Activated CD8-positive, alpha-beta memory T cell treated with anti-CD3 and anti-CD28 coated beads, Interleukin-2, amount 10 ng/mL, durations not matched to agents 7 days and 5 days (primary cell): ENCODE measurements at regions of chr3 and their contacts with region 1.

Region 1: GRCh38 chr3:184229394-184230080 is at the start of gene VWA5B2:
- DNase-seq: peak; percentile 74
- ATAC-seq: peak; percentile 96
- H3K4me3 Mint-ChIP-seq: no peak within 1 kb of the TSS
- H3K27ac Mint-ChIP-seq: no peak within 1 kb of the TSS
- H3K4me1 Mint-ChIP-seq: peaks cover 6% of the 10 kb centered on the region
- H3K27me3 Mint-ChIP-seq: peaks cover 50% of the 10 kb centered on the region
- total RNA-seq, gene VWA5B2: not detected

Region 2: GRCh38 chr3:184185461-184186308 is 43.9 kb before region 1 on chr3 and contains the start of gene ABCF3:
- CTCF ChIA-PET with region 1: interaction called, 20 read pairs
- DNase-seq: peak; percentile 99
- ATAC-seq: peak; percentile 96
- H3K4me3 Mint-ChIP-seq: peak within 1 kb of the TSS; percentile 86
- H3K27ac Mint-ChIP-seq: peak within 1 kb of the TSS; percentile 91
- H3K4me1 Mint-ChIP-seq: peaks cover 30% of the 10 kb centered on the region
- H3K27me3 Mint-ChIP-seq: no peaks in the 10 kb centered on the region
- total RNA-seq, gene ABCF3: 57.6 to 60.2 TPM

Region 3: DNA sequence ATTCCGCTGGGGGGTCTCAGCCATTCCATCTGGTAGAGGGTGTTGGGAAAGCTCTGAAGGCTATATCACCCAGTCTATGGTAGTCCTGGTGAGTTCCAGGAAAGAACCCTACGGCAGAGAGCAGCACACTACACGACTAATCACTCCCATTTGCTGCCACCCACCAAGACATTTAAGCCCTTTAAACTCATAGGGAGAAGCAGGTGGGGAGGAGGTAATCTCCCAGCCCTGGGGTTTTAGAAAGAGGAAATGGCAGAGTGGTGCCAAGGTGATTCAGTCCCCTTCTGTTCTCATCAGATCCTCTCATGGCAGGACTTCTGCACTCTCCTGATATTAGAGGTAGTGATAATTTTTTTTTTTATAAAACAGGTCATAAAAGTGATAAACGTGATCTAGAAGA is 10.7 kb before region 1 on chr3:
- CTCF ChIA-PET with region 1: interaction called, 12 read pairs
- DNase-seq: no peak
- ATAC-seq: no peak
- H3K4me3 Mint-ChIP-seq: no peak overlapping the region
- H3K27ac Mint-ChIP-seq: no peak overlapping the region
- H3K4me1 Mint-ChIP-seq: no peaks in the 10 kb centered on the region
- H3K27me3 Mint-ChIP-seq: peaks cover 14% of the 10 kb centered on the region

Region 4: DNA sequence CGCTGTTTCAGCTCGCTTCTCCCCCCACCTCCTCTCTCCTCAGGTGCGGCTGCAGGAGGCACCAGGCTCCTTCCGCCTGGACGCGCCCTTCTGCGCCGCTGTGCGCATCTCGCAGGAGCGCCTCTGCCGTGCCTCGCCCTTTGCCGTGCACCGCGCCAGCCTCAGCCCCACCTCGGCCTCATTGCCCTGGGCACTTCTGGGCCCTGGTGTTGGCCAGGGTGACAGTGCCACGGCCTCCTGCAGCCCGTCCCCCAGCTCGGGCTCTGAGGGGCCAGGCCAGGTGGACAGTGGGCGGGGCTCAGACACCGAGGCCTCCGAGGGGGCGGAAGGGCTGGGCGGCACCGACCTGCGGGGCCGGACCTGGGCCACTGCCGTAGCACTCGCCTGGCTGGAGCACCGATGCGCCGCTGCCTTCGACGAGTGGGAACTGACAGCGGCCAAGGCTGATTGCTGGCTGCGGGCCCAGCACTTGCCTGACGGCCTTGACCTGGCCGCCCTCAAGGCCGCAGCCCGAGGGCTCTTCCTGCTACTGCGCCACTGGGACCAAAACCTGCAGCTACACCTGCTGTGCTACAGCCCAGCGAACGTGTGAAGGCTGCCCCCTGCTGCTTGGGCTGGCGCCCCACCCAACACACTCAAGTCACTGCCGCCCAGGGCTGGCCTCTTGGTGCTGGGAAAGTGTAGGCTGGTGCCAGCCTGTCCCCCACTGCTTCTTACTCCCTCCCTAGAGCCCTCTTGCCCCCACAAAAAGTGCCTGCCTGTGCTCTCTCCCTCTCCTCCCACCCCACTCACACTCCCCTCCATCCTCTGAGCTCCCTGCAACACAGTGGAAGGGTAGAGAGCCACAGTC is 12.1 kb after region 1 on chr3:
- CTCF ChIA-PET with region 1: interaction called, 47 read pairs
- DNase-seq: no peak
- ATAC-seq: peak; percentile 44
- H3K4me3 Mint-ChIP-seq: no peak overlapping the region
- H3K27ac Mint-ChIP-seq: no peak overlapping the region
- H3K4me1 Mint-ChIP-seq: no peaks in the 10 kb centered on the region
- H3K27me3 Mint-ChIP-seq: no peaks in the 10 kb centered on the region

Region 5: DNA sequence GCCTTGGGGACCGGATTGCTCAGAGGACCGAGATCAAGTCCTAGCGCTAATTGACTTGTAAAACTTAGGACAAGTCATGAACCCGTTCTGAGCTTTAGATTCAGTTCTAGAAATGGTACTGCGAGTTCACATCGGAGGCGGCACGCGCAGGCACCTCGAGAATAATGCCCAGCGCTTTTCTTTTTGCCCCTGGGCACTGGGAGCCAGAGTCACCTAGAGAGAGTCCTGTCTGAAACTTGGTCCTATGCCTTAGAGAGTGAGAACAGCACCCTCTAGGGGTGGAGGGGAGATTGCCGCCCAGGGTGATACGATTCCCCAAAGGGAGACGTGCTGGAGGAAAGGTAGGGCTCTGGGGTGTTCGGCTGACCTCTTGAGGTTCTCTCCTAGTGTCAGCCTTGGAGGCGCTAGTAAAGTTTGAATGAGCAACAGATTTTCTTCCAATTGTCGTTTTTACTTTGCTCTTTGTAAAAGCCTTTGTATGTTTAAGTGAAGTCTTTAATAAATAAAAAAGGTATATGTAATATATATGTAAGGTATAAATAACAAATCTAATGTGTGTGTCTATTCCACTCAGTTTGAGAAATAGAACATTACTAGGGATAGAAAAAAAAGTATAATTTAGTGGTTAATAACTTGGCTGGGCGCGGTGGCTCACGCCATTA is 20.8 kb after region 1 on chr3:
- CTCF ChIA-PET with region 1: interaction called, 42 read pairs
- DNase-seq: peak; percentile 95
- ATAC-seq: peak; percentile 65
- H3K4me3 Mint-ChIP-seq: peak overlapping the region; percentile 85
- H3K27ac Mint-ChIP-seq: peak overlapping the region; percentile 90
- H3K4me1 Mint-ChIP-seq: peaks cover 6% of the 10 kb centered on the region
- H3K27me3 Mint-ChIP-seq: no peaks in the 10 kb centered on the region

Region 6: GRCh38 chr3:184255291-184256039 is 25.9 kb after region 1 on chr3:
- CTCF ChIA-PET with region 1: interaction called, 42 read pairs
- DNase-seq: peak; percentile 48
- ATAC-seq: no peak
- H3K4me3 Mint-ChIP-seq: no peak overlapping the region
- H3K27ac Mint-ChIP-seq: no peak overlapping the region
- H3K4me1 Mint-ChIP-seq: peaks cover 9% of the 10 kb centered on the region
- H3K27me3 Mint-ChIP-seq: peaks cover 14% of the 10 kb centered on the region

Region 7: GRCh38 chr3:184289426-184289938 is 59.9 kb after region 1 on chr3:
- CTCF ChIA-PET with region 1: interaction called, 22 read pairs
- DNase-seq: peak; percentile 76
- ATAC-seq: peak; percentile 80
- H3K4me3 Mint-ChIP-seq: no peak overlapping the region
- H3K27ac Mint-ChIP-seq: no peak overlapping the region
- H3K4me1 Mint-ChIP-seq: no peaks in the 10 kb centered on the region
- H3K27me3 Mint-ChIP-seq: peaks cover 14% of the 10 kb centered on the region

Region 8: DNA sequence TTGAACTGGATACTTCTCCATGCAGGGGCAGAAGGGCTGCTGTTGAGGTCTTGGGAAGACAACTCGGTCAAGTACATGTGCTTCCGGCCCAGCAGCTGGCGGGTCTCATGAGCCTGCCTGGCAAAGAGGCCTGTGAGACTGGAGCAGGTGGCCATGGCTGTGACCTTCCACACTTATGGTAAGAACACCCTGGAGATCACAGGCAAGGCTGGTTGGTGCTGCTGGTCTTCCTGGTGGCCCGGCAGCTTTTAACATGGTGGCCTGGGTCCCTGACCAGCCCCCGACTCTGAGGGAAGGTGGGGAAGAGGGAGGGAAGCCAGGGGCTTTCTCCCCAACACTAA is 165.8 kb after region 1 on chr3:
- CTCF ChIA-PET with region 1: no interaction called
- DNase-seq: no peak
- ATAC-seq: no peak
- H3K4me3 Mint-ChIP-seq: no peak overlapping the region
- H3K27ac Mint-ChIP-seq: no peak overlapping the region
- H3K4me1 Mint-ChIP-seq: no peaks in the 10 kb centered on the region
- H3K27me3 Mint-ChIP-seq: peaks cover 26% of the 10 kb centered on the region